HepG2 (cell line): ENCODE measurements at regions of chr17 and their contacts with region 1.

Region 1: DNA sequence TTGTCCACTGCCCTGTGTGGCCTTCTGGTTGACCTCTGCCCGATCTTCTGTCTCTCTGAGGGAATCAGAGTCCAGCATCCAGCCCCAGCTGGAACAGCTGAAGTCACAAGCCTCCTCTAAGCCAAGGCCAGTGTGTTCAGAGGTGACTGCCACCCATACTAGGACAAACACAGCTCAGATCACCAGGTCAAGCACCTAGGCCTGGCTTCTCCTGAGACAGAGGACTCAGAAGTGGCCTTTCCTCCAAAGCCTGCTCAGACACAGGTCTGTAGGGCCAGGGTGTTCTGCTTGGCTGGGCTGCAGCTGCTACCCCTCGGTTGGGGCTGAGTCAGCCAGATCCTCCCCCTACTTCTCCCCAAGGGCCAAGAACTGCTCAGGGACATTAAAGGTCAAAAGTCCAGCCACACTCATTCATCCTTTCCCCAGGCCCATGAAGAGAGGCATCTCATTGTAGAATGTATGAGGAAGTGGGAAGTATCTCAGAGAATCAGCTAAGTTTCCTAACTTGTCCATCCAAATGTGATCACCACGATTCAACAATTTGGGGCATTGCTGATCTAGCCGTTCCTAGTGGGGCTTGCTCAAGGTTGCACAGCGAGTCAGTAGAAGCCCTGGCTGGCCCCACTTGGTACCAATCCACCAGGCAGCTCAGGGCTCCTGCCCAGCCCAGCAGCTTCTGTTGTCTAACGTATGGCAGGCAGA is 7.6 kb downstream of the SLC46A1 start:
- DNase-seq: peak; percentile 8
- ATAC-seq: peak; percentile 73
- H3K4me3 ChIP-seq: no peak overlapping the region
- H3K27ac ChIP-seq: peak overlapping the region; percentile 31
- H3K4me1 ChIP-seq: peaks cover 40% of the 10 kb centered on the region
- H3K27me3 ChIP-seq: no peaks in the 10 kb centered on the region
- CTCF ChIP-seq: no peak
- EP300 ChIP-seq: no peak
- POLR2A ChIP-seq: no peak
- RAD21 ChIP-seq: no peak

Region 2: GRCh38 chr17:28416703-28417311 is 18.4 kb after region 1 on chr17:
- CTCF ChIA-PET with region 1: no interaction called
- POLR2A ChIA-PET with region 1: interaction called, 6 read pairs
- in situ Hi-C with region 1: no loop called
- intact Hi-C with region 1: loop called (anchors 2 kb)
- DNase-seq: peak; percentile 87
- ATAC-seq: peak; percentile 99
- H3K4me3 ChIP-seq: no peak overlapping the region; a peak in 1 of 6 replicates
- H3K27ac ChIP-seq: no peak overlapping the region
- H3K4me1 ChIP-seq: peaks cover 22% of the 10 kb centered on the region
- H3K27me3 ChIP-seq: 0 out of 5 replicates have a peak, but pooled peaks cover 0 to 7% of the 10 kb centered on the region in 2 experiments
- CTCF ChIP-seq: peak; percentile 96
- EP300 ChIP-seq: no peak
- POLR2A ChIP-seq: no peak
- RAD21 ChIP-seq: peak; percentile 83

Region 3: GRCh38 chr17:28427371-28427770 is 28.9 kb after region 1 on chr17:
- CTCF ChIA-PET with region 1: no interaction called
- POLR2A ChIA-PET with region 1: no interaction called
- in situ Hi-C with region 1: no loop called
- intact Hi-C with region 1: no loop called
- DNase-seq: no peak
- ATAC-seq: no peak
- H3K4me3 ChIP-seq: no peak overlapping the region
- H3K27ac ChIP-seq: no peak overlapping the region
- H3K4me1 ChIP-seq: peaks cover 24% of the 10 kb centered on the region
- H3K27me3 ChIP-seq: peaks cover 0 to 3% of the 10 kb centered on the region in 2 experiments; a peak in 2 of 5 replicates
- CTCF ChIP-seq: no peak
- EP300 ChIP-seq: no peak
- POLR2A ChIP-seq: no peak
- RAD21 ChIP-seq: no peak